Dorsolateral prefrontal cortex (tissue), 120 donors: ENCODE measurements at regions of chr1 and their contacts with region 1.

Region 1: DNA sequence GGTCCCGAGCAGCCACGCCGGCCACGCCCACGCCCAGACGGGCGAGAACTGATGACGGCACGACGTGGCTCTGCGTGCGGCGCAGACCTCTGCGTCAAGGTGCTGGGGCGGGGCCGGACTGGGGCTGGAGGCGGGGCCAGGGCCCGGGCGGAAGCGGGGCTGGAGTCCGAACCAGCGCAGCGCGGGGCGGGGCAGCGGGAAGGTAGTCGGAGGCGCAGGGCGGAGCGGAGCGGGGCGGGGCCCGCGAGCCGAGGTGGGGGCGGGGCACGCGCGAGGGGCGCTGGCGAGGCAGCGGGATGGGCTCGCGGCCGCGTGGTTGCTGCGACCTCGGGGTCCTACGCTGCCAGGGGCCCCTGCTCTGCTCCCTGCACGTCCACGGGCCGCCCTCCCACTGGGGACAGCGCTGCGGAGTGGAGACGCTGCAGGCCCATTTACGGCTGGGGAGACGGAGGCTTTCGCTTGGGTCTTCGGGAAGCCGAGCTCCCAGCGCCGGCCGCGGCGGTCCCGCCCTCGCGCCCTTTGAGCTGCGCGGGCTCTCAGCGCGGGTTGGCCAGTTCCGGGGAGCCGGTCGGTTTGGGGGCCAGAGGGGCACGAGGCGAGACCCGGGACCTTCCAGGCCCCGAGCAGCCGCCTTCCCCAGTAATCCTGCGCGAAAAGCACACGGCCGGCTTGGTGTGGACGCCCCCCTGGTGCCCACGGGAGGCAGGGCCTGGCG is at the start of gene PEX10:
- DNase-seq: peak; percentile 89 to 99 (median 94)
- H3K4me3 ChIP-seq: peak within 1 kb of the TSS; percentile 62 to 98 (median 86)
- H3K27ac ChIP-seq: peak within 1 kb of the TSS in 57 of 59 donors; percentile 20 to 95 (median 84)
- H3K27me3 ChIP-seq: peaks cover 0 to 14% (median 0%) of the 10 kb centered on the region in 45 donors
- CTCF ChIP-seq: peak in 20 of 56 donors; percentile 3 to 56 (median 24)
- total RNA-seq, gene PEX10: 15.4 to 34.4 (median 24.5) TPM

Region 2: DNA sequence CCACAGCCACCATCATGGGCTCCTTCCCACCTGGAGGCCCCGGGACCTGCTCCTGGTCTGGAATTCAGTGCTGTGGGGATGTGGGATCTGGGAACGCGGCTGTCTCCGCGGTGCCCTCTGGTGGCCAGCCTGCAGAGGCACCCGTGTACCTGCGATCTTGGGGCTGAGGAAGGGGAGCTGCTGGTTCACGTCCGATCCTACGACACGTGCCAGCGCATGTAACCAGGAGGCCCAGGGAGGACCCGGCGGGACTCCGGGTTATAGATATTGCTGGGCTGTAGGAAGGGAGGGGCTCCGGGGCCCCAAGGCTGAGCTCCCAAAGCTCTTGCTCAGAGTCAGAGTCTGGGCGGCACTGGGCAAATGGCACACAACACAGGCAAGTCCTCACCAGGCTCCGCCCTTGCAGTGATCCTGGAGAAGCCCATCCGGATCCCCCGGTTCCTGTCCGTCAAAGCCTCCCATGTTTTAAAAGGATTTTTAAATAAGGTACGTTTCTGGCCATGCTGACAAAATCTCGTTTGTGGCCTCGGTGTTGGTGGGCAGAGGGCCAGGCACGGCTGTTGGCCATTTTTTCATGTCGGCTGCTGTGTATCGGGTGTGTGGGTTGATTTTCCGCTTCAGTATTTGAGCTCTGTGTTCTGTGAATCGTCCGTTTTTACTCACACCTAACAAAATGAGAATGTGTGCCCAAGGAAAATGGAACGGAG is 238.2 kb before region 1 on chr1:
- intact Hi-C with region 1: no loop called
- DNase-seq: peak in 6 of 10 donors; percentile 45 to 81 (median 63)
- H3K4me3 ChIP-seq: peak overlapping the region in 44 of 59 donors; percentile 0 to 53 (median 30)
- H3K27ac ChIP-seq: peak overlapping the region in 29 of 59 donors; percentile 8 to 73 (median 46)
- H3K27me3 ChIP-seq: no peaks in the 10 kb centered on the region
- CTCF ChIP-seq: peak; percentile 60 to 94 (median 81)

Region 3: DNA sequence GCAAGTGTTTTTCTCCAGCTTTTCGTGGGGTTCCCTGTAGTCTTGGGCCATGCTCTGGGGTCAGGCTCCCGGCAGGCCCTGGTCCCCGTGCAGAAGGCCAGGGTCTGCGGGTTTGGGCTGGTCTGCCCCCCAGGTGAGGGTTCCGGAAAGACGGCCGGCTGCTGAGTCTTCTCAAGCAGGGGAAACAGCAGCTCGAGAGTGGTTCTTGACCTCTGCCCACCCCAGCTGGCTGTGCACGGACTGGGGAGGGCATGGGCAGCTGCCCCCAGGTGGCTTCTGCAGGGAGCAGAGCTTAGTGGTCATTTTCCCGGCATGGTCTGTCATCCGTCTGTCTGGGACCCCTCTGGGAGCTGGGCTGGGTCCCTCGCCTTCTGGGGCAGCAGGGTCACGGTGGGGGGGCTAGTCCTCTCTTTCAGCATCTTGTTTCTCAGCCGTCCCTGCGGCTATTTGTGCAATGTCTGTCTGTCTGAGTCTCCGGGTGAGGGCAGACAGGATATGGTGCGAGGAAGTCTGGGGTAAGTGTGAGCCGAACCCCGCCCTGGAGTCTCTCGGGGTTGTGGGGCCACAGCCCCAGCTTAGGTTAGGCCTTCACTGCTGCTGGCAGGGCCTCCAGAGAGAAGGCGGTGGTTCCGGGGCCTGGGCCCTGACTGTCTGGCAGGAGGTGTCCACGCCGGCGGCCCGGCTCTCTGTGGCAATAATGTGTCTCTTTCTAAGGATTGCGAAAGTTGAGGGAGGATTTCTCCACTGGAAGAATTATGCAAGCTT is 178.5 kb before region 1 on chr1:
- intact Hi-C with region 1: no loop called
- DNase-seq: peak in 6 of 10 donors; percentile 50 to 81 (median 66)
- H3K4me3 ChIP-seq: peak overlapping the region; percentile 2 to 86 (median 72)
- H3K27ac ChIP-seq: peak overlapping the region in 57 of 59 donors; percentile 2 to 96 (median 84)
- H3K27me3 ChIP-seq: no peaks in the 10 kb centered on the region
- CTCF ChIP-seq: no peak

Region 4: DNA sequence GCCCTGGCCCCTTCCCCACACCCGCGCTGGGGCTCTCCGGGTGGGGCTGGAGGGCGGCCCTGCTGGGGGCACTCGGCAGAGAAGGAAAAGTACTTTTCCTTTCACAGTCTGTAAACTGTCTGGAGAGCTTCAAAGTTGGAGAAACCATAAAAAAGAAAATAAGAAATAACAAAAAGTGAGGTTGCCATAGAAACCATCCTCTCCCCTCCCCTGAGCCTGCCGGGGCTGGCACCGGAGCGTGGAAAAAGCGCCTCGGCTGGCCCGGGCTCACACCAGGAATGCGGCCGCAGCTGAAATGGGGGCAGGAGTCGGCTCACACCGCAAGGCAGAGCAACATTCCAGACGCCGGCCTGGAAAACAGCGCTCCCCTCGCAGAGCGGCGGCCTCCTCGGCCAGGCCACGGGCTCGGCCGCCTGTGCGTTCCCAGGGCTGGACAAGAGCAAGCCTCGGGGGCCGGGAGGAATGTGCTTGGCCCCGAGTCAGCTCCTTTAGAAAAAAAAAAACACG is 90.6 kb before region 1 on chr1:
- intact Hi-C with region 1: no loop called
- DNase-seq: peak in 2 of 10 donors; percentile 66 to 72
- H3K4me3 ChIP-seq: peak overlapping the region in 42 of 59 donors; percentile 2 to 51 (median 25)
- H3K27ac ChIP-seq: peak overlapping the region in 29 of 59 donors; percentile 8 to 78 (median 44)
- H3K27me3 ChIP-seq: peaks cover 0 to 48% (median 0%) of the 10 kb centered on the region in 45 donors
- CTCF ChIP-seq: no peak

Region 5: GRCh38 chr1:2459757-2460156 is 47.1 kb after region 1 on chr1:
- intact Hi-C with region 1: loop called in 1 of 2 experiments (anchors 2 kb)
- DNase-seq: peak; percentile 71 to 89 (median 80)
- H3K4me3 ChIP-seq: peak overlapping the region in 1 of 59 donors; percentile 4
- H3K27ac ChIP-seq: peak overlapping the region in 52 of 59 donors; percentile 7 to 87 (median 71)
- H3K27me3 ChIP-seq: peaks cover 0 to 8% (median 0%) of the 10 kb centered on the region in 45 donors
- CTCF ChIP-seq: peak in 53 of 56 donors; percentile 21 to 75 (median 56)

Region 6: DNA sequence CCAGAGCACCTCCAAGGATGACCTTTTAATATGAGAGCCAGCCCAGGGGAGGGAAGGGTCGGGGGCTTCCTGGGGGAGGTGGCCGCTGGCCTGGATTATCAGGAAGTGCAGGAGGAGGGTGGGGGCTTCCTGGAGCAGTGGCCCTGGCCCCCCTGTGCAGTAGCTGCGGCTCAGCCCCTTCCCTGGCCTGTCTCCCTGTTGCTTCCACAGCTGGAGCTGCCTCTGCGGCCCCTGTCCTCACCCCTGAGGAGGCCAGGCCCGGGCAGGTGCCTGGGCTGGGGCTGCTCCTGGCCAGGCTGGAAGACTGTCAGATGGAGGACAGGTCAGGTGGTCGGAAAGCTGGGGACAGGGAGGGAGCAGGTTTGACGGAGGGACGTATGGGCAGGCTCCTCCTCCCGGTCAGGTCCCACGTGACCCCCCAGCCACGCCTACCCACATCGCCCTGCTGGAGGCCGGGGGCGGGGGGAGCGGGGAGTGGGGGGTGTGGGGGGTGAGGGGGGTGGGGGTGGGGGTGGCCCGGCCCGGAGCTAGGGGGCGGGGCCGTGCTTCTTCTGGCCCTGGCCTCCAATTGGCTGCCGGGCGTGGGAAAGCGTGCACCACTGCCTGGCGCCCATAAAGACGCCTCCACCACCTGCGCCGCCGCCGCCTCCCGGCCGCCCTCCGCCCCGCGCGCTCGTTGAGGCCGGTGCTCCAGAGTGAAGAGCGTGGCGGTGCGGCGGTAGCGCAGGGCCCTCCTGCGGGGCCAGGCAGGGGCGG is 133.3 kb after region 1 on chr1:
- intact Hi-C with region 1: loop called (anchors 1 kb)
- DNase-seq: peak in 9 of 10 donors; percentile 39 to 86 (median 76)
- H3K4me3 ChIP-seq: peak overlapping the region; percentile 25 to 69 (median 56)
- H3K27ac ChIP-seq: peak overlapping the region in 56 of 59 donors; percentile 29 to 99 (median 96)
- H3K27me3 ChIP-seq: peaks cover 0 to 7% (median 0%) of the 10 kb centered on the region in 45 donors
- CTCF ChIP-seq: peak in 1 of 56 donors; percentile 3

Region 7: GRCh38 chr1:2642560-2643413 is 230.1 kb after region 1 on chr1:
- intact Hi-C with region 1: loop called in 1 of 2 experiments (anchors 10 kb)
- DNase-seq: peak; percentile 74 to 92 (median 88)
- H3K4me3 ChIP-seq: peak overlapping the region; percentile 58 to 100 (median 92)
- H3K27ac ChIP-seq: peak overlapping the region in 53 of 59 donors; percentile 15 to 96 (median 81)
- H3K27me3 ChIP-seq: no peaks in the 10 kb centered on the region
- CTCF ChIP-seq: peak in 30 of 56 donors; percentile 6 to 47 (median 22)

Region 8: GRCh38 chr1:3423245-3423829 is 1010.7 kb after region 1 on chr1:
- intact Hi-C with region 1: loop called (anchors 5 to 10 kb)
- DNase-seq: peak in 9 of 10 donors; percentile 47 to 79 (median 69)
- H3K4me3 ChIP-seq: no peak overlapping the region
- H3K27ac ChIP-seq: peak overlapping the region in 52 of 59 donors; percentile 19 to 85 (median 68)
- H3K27me3 ChIP-seq: no peaks in the 10 kb centered on the region
- CTCF ChIP-seq: peak in 2 of 56 donors; percentile 12 to 16